ENCODE measurements at regions of chr11 and their contacts with region 1.

Region 1: GRCh38 chr11:35391922-35392813 is 27.2 kb downstream of the SLC1A2 start:
- DNase-seq: peak; percentile 80 to 82 (median 81)
- ATAC-seq: peak; percentile 98
- H3K4me3 ChIP-seq: no peak overlapping the region
- H3K27ac ChIP-seq: no peak overlapping the region
- H3K4me1 ChIP-seq: no peaks in the 10 kb centered on the region
- H3K27me3 ChIP-seq: peaks cover 0 to 19% of the 10 kb centered on the region in 2 experiments
- CTCF ChIP-seq: peak; percentile 79 to 90 (median 81)
- EP300 ChIP-seq: no peak
- POLR2A ChIP-seq: no peak
- RAD21 ChIP-seq: peak; percentile 94 to 96

Region 2: GRCh38 chr11:34512840-34513681 is 879.1 kb before region 1 on chr11:
- CTCF ChIA-PET with region 1: no interaction called
- POLR2A ChIA-PET with region 1: no interaction called
- in situ Hi-C with region 1: no loop called
- intact Hi-C with region 1: loop called (anchors 5 kb)
- DNase-seq: peak; percentile 73 to 79 (median 77)
- ATAC-seq: peak; percentile 99
- H3K4me3 ChIP-seq: no peak overlapping the region
- H3K27ac ChIP-seq: no peak overlapping the region
- H3K4me1 ChIP-seq: peaks cover 0 to 3% of the 10 kb centered on the region in 2 experiments; a peak in 1 of 5 replicates
- H3K27me3 ChIP-seq: peaks cover 0 to 3% of the 10 kb centered on the region in 2 experiments; a peak in 1 of 5 replicates
- CTCF ChIP-seq: peak; percentile 85 to 95 (median 93)
- EP300 ChIP-seq: no peak
- POLR2A ChIP-seq: no peak
- RAD21 ChIP-seq: peak; percentile 63 to 74

Region 3: GRCh38 chr11:34585735-34586487 is 806.3 kb before region 1 on chr11:
- CTCF ChIA-PET with region 1: interaction called, 7 read pairs
- POLR2A ChIA-PET with region 1: no interaction called
- in situ Hi-C with region 1: no loop called
- intact Hi-C with region 1: loop called (anchors 5 kb)
- DNase-seq: peak; percentile 38 to 71 (median 50)
- ATAC-seq: peak; percentile 70
- H3K4me3 ChIP-seq: no peak overlapping the region
- H3K27ac ChIP-seq: peak overlapping the region; percentile 44; the same call in 2 of the 3 replicates
- H3K4me1 ChIP-seq: peaks cover 0 to 40% of the 10 kb centered on the region in 2 experiments; a peak in 3 of 5 replicates
- H3K27me3 ChIP-seq: peaks cover 0 to 3% of the 10 kb centered on the region in 2 experiments; a peak in 3 of 5 replicates
- CTCF ChIP-seq: peak; percentile 59 to 83 (median 65); a peak in 5 of 6 replicates
- EP300 ChIP-seq: peak; percentile 17; the same call in 1 of the 2 replicates
- POLR2A ChIP-seq: no peak
- RAD21 ChIP-seq: peak; percentile 96 to 97

Region 4: GRCh38 chr11:34926101-34926830 is 465.9 kb before region 1 on chr11:
- CTCF ChIA-PET with region 1: interaction called, 9 read pairs
- POLR2A ChIA-PET with region 1: no interaction called
- in situ Hi-C with region 1: loop called (anchors 5 kb)
- intact Hi-C with region 1: loop called (anchors 1 kb)
- DNase-seq: peak in 1 of 4 experiments; percentile 54
- ATAC-seq: peak; percentile 75
- H3K4me3 ChIP-seq: no peak overlapping the region
- H3K27ac ChIP-seq: no peak overlapping the region
- H3K4me1 ChIP-seq: peaks cover 0 to 4% of the 10 kb centered on the region in 2 experiments; a peak in 3 of 5 replicates
- H3K27me3 ChIP-seq: no peaks in the 10 kb centered on the region
- CTCF ChIP-seq: peak; percentile 55 to 87 (median 59); a peak in 5 of 6 replicates
- EP300 ChIP-seq: no peak
- POLR2A ChIP-seq: no peak
- RAD21 ChIP-seq: peak; percentile 89 to 91

Region 5: DNA sequence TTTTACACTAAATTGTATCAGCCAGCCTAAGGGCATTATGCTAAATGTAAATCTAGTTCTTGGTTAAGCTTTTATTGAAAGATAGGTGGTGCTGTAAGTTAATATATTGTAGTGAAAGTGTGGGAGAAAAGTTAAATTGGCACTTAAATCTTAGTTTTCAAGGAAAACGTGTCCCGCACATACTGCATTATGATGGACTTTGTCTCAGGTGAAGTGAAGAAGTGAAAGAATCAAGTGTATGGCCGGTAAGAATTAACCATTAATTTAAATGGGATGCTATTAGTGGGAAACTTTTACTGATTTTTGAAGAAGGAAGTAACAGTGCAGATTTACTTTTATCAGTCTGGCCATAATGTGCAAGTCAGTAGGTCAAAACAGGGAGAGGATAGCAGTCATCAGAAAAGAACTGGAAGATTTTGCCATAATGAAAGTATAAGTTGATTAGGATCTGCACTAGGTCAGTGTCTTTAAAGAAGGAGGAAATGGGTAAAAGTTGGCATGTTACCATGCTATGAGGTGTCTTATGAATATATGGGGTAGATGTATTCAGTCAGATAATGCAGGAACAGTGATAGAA is 394.1 kb before region 1 on chr11:
- CTCF ChIA-PET with region 1: interaction called, 5 read pairs
- POLR2A ChIA-PET with region 1: no interaction called
- in situ Hi-C with region 1: no loop called
- intact Hi-C with region 1: loop called (anchors 5 kb)
- DNase-seq: no peak
- ATAC-seq: no peak; the same call in 2 of the 3 replicates
- H3K4me3 ChIP-seq: no peak overlapping the region
- H3K27ac ChIP-seq: no peak overlapping the region
- H3K4me1 ChIP-seq: no peaks in the 10 kb centered on the region
- H3K27me3 ChIP-seq: no peaks in the 10 kb centered on the region
- CTCF ChIP-seq: peak in 2 of 3 experiments; percentile 39 to 60; a peak in 2 of 6 replicates
- EP300 ChIP-seq: no peak
- POLR2A ChIP-seq: no peak
- RAD21 ChIP-seq: peak; percentile 87 to 92

Region 6: GRCh38 chr11:35260342-35260985 is 131.7 kb before region 1 on chr11:
- CTCF ChIA-PET with region 1: interaction called, 5 read pairs
- POLR2A ChIA-PET with region 1: no interaction called
- in situ Hi-C with region 1: no loop called
- intact Hi-C with region 1: loop called (anchors 5 kb)
- DNase-seq: no peak
- ATAC-seq: no peak
- H3K4me3 ChIP-seq: no peak overlapping the region
- H3K27ac ChIP-seq: no peak overlapping the region
- H3K4me1 ChIP-seq: no peaks in the 10 kb centered on the region
- H3K27me3 ChIP-seq: peaks cover under 1 to 4% of the 10 kb centered on the region in 2 experiments; a peak in 1 of 5 replicates
- CTCF ChIP-seq: no peak
- EP300 ChIP-seq: no peak
- POLR2A ChIP-seq: no peak
- RAD21 ChIP-seq: no peak

Region 7: DNA sequence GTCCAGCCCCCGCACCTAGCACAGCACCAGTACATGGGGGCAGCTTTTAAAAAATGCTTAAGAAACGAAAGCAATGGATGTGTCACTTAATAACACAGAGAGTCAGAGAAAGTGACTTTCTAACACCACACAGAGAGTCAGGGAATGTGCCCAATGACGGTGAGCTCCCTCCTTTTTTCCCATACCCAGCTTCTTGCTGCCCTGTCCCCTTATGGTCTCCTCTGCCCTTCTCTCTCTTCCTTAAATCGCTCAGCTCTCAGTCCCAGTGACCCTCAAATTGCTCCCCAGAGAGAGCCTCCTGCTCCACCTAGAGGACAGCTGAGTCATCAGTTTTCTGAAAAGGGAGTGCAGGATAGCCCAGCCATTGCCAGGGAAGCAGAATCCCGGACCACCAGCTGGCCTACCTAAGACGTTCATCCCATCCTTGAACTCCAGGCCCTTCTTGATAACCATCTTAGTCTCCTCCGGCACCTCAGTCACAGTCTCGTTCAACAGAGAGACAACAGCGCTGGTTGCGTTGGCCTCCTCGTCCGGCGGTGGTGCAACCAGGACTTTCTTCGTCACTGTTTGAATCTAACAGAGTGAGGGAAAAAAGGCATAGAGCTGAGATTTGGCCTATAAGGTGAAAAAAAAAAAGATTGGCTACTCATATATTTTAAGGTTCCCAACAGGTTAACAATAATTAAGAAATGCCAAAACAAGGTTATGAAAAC is 86.3 kb before region 1 on chr11:
- CTCF ChIA-PET with region 1: no interaction called
- POLR2A ChIA-PET with region 1: no interaction called
- in situ Hi-C with region 1: no loop called
- intact Hi-C with region 1: loop called (anchors 5 kb)
- DNase-seq: peak; percentile 50 to 63 (median 51)
- ATAC-seq: peak; percentile 89
- H3K4me3 ChIP-seq: no peak overlapping the region
- H3K27ac ChIP-seq: no peak overlapping the region
- H3K4me1 ChIP-seq: no peaks in the 10 kb centered on the region; a peak in 2 of 5 replicates
- H3K27me3 ChIP-seq: peaks cover 2 to 9% of the 10 kb centered on the region in 2 experiments; a peak in 4 of 5 replicates
- CTCF ChIP-seq: peak; percentile 50 to 64 (median 62)
- EP300 ChIP-seq: no peak
- POLR2A ChIP-seq: no peak
- RAD21 ChIP-seq: peak; percentile 58 to 69

Region 8: GRCh38 chr11:35404388-35404775 is 12.2 kb after region 1 on chr11:
- CTCF ChIA-PET with region 1: no interaction called
- POLR2A ChIA-PET with region 1: no interaction called
- in situ Hi-C with region 1: no loop called
- intact Hi-C with region 1: no loop called
- DNase-seq: peak; percentile 42 to 56 (median 49)
- ATAC-seq: peak; percentile 92
- H3K4me3 ChIP-seq: no peak overlapping the region
- H3K27ac ChIP-seq: no peak overlapping the region
- H3K4me1 ChIP-seq: no peaks in the 10 kb centered on the region
- H3K27me3 ChIP-seq: peaks cover 5 to 9% of the 10 kb centered on the region in 2 experiments; a peak in 3 of 5 replicates
- CTCF ChIP-seq: peak; percentile 55 to 79 (median 72)
- EP300 ChIP-seq: no peak
- POLR2A ChIP-seq: no peak
- RAD21 ChIP-seq: peak; percentile 59 to 72

Measured in K562 (cell line).